ENCODE measurements at regions of chr22 and their contacts with region 1.

Region 1: GRCh38 chr22:17638432-17639246 is at the start of gene BCL2L13:
- DNase-seq: peak; percentile 97
- H3K4me3 Mint-ChIP-seq: peak within 1 kb of the TSS; percentile 91
- H3K27ac Mint-ChIP-seq: peak within 1 kb of the TSS; percentile 95
- H3K4me1 Mint-ChIP-seq: peaks cover 12% of the 10 kb centered on the region
- H3K27me3 Mint-ChIP-seq: no peaks in the 10 kb centered on the region
- total RNA-seq, gene BCL2L13: 34.0 and 39.6 TPM in 2 replicates

Region 2: GRCh38 chr22:17095538-17095937 is 543.1 kb before region 1 on chr22:
- intact Hi-C with region 1: loop called (anchors 10 kb)
- DNase-seq: no peak
- H3K4me3 Mint-ChIP-seq: no peak overlapping the region
- H3K27ac Mint-ChIP-seq: no peak overlapping the region
- H3K4me1 Mint-ChIP-seq: peaks cover 80% of the 10 kb centered on the region
- H3K27me3 Mint-ChIP-seq: no peaks in the 10 kb centered on the region

Region 3: GRCh38 chr22:17628304-17629166 is 10.1 kb before region 1 on chr22 and contains the start of gene ATP6V1E1:
- intact Hi-C with region 1: loop called (anchors 1 kb)
- DNase-seq: peak; percentile 99
- H3K4me3 Mint-ChIP-seq: peak within 1 kb of the TSS; percentile 93
- H3K27ac Mint-ChIP-seq: peak within 1 kb of the TSS; percentile 89
- H3K4me1 Mint-ChIP-seq: peaks cover 16% of the 10 kb centered on the region
- H3K27me3 Mint-ChIP-seq: no peaks in the 10 kb centered on the region
- total RNA-seq, gene ATP6V1E1: 109 and 114 TPM in 2 replicates

Region 4: DNA sequence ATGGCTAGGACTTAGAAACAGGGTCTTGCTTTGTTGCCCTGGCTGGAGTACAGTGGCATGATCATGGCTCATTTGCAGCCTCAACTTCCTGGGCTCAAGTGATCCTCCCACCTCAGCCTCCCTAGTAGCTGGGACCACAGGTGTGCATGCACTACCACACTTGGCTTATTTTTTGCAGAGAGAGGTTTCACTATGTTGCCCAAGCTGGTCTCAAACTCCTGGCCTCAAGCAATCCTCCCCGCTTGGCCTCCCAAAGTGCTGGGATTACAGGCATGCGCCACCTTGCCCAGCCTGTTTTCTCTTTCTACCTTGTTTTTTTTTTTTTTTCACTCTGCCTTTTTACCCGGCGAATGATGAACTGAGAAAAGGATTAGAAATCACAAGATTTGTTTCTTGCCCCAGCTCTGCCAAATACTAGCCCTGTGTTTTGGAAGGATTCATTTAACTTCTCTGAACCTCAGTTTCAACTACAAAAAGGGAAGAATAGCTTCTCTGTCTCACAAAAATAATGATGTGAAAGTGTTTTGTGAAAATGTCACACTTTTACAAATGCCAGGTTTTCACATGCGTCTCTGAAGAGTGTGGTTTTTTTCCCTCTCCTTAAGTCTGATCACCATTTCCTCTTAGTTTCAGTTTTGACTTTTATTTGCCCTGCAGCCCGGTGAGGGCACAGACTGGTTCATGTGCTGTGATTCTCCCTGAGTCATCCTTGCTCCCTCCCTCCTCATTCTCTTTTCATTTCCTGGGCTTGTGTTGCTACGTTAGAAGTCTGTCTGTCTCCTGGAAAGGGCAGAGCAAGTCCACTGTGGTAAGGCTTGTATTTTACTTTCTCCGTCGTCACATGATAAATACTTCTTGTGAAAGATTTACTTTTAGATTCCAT is 67.6 kb after region 1 on chr22:
- intact Hi-C with region 1: loop called (anchors 2 kb)
- DNase-seq: peak; percentile 78
- H3K4me3 Mint-ChIP-seq: peak overlapping the region; percentile 62
- H3K27ac Mint-ChIP-seq: peak overlapping the region; percentile 77
- H3K4me1 Mint-ChIP-seq: peaks cover 18% of the 10 kb centered on the region
- H3K27me3 Mint-ChIP-seq: no peaks in the 10 kb centered on the region

Region 5: DNA sequence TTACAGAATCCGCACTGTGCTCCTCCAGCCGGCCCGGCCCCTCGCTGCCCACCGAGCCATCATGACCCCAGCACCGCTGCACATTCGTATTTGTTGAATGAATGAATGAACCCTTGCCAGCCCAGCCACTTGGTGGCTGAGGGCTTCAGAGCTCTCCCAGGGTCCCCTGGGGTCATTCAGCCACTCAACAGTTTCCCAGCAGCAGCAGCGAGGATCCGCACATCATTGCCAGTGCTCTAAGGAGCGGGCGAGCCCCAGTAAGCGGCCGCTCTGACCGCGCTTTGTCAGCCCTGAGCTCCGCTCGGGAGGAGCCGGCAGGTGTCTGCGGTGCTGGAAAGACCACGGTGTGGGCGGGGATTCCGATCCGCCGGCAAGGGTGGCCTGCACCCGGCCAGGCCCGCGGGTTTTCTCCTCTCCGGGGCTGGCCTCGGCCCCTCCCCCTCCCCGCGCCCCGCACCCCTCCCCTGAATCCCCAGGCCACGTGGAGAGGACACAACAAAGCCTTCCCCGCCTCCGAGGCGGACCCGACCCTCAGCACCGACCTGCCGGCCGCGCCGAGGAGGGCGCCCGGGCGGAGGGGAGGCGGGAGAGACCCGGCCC is 135.1 kb after region 1 on chr22:
- intact Hi-C with region 1: loop called (anchors 5 kb)
- DNase-seq: peak; percentile 90
- H3K4me3 Mint-ChIP-seq: peak overlapping the region; percentile 86
- H3K27ac Mint-ChIP-seq: peak overlapping the region; percentile 77
- H3K4me1 Mint-ChIP-seq: peaks cover 50% of the 10 kb centered on the region
- H3K27me3 Mint-ChIP-seq: peaks cover 14% of the 10 kb centered on the region